ENCODE measurements at regions of chr2 and their contacts with region 1.

Region 1: GRCh38 chr2:19347619-19348562 is 10.5 kb downstream of the OSR1 start:
- DNase-seq: peak; percentile 89 to 99 (median 97)
- ATAC-seq: peak; percentile 88
- H3K4me3 ChIP-seq: peak overlapping the region; percentile 76 to 96
- H3K4me3 Mint-ChIP-seq: peak overlapping the region; percentile 96
- H3K27ac ChIP-seq: peak overlapping the region; percentile 86 to 93
- H3K27ac Mint-ChIP-seq: peak overlapping the region; percentile 99
- H3K4me1 ChIP-seq: peaks cover 39% of the 10 kb centered on the region
- H3K4me1 Mint-ChIP-seq: peaks cover 36% of the 10 kb centered on the region
- H3K27me3 ChIP-seq: peaks cover 34% of the 10 kb centered on the region in 2 experiments
- H3K27me3 Mint-ChIP-seq: peaks cover 35% of the 10 kb centered on the region
- CTCF ChIP-seq: no peak

Region 2: DNA sequence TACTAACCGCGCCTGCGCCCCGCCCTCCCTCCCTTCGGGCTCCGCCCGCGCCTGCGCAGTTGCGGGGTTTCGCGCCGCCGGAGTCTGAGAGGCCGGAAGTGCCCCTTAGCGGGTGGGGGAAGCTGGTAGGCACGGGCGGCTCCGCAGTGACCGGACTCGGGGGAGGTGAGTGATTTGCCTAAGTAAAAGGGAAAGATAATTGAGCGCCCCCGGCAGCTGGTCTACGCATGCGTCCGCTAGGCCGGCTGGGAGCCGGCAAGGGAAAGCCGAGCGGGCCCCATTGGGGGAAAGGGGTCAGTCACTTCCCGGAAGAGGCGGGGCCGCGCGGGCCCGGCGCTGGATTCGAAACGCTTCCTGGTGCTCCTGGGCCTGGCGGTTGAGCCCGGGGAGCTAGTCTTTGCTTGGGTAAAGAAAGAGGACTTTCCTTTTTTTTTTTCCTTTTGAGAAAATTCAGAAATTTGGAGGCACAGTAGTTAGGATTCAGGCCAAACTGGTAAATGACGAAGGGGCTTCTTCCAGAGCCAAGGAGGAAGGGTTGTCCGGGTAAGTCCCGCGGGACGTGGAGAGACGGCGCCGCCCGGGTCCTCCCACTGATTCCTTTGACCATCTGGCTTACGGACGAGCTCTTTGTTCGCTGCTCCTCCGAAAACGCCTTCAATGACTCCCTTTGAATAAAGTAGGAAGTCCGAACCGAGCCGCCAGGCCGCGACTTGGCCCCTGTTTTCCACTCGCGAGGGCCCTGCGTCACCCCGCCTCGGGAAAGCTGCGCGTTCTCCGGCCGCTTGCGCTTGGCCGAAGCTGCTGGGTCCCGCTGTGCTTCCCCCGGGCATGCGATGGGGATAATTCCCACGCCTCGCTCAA is 1593.9 kb before region 1 on chr2 and contains the starts of genes GEN1 and SMC6:
- CTCF ChIA-PET with region 1: no interaction called
- POLR2A ChIA-PET with region 1: no interaction called
- intact Hi-C with region 1: loop called (anchors 5 kb)
- DNase-seq: peak; percentile 79 to 95 (median 90)
- ATAC-seq: peak; percentile 82
- H3K4me3 ChIP-seq: peak within 1 kb of the TSS; percentile 82 to 87
- H3K4me3 Mint-ChIP-seq: peak within 1 kb of the TSS; percentile 92
- H3K27ac ChIP-seq: peak within 1 kb of the TSS; percentile 95 to 100
- H3K27ac Mint-ChIP-seq: peak within 1 kb of the TSS; percentile 97
- H3K4me1 ChIP-seq: peaks cover 17% of the 10 kb centered on the region
- H3K4me1 Mint-ChIP-seq: peaks cover 27% of the 10 kb centered on the region
- H3K27me3 ChIP-seq: no peaks in the 10 kb centered on the region
- H3K27me3 Mint-ChIP-seq: no peaks in the 10 kb centered on the region
- CTCF ChIP-seq: no peak
- total RNA-seq, gene GEN1: 6.3 to 7.3 TPM
- total RNA-seq, gene SMC6: 5.0 to 6.2 TPM

Region 3: DNA sequence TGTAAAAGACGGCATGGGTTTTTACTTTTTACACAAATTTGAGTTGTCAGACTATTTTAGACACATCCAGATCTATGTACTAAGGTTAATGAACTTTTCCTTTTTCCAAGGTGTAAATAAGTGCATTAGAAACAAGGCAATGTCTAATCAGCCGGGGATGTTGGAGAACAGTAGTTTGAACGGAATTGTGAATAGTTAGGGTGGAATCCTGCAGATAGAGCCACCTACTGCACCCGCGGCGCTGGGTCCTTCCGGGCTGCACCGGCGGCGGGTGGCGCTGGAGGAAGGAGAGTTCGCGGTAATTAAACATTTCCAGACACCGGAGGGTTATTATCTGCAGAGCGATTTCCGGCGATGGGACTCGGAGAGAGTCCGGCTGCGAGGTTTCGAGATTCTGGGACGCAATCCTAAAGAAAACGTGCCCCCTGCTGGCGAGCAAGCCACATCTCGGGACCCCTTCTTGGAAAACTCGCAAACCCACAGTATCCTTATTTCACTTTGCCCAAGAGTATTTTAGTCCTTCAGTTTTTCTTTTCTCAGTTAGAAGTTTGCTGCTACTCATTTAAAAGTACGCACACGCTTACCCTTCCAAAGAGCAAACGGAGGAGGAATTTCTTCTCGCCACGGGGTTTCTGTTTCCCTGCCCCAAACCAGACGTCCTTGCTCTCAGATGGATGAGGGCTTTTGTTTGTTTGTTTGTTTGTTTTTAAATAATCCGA is 15.0 kb after region 1 on chr2:
- CTCF ChIA-PET with region 1: interaction called, 33 read pairs
- POLR2A ChIA-PET with region 1: interaction called, 36 read pairs
- intact Hi-C with region 1: loop called (anchors 1 to 2 kb)
- DNase-seq: peak in 6 of 9 experiments; percentile 29 to 74 (median 52)
- ATAC-seq: peak; percentile 48
- H3K4me3 ChIP-seq: peak overlapping the region; percentile 67 to 70
- H3K4me3 Mint-ChIP-seq: peak overlapping the region; percentile 93
- H3K27ac ChIP-seq: no peak overlapping the region
- H3K27ac Mint-ChIP-seq: peak overlapping the region; percentile 68
- H3K4me1 ChIP-seq: peaks cover 36% of the 10 kb centered on the region
- H3K4me1 Mint-ChIP-seq: peaks cover 37% of the 10 kb centered on the region
- H3K27me3 ChIP-seq: peaks cover 28 to 33% of the 10 kb centered on the region in 2 experiments
- H3K27me3 Mint-ChIP-seq: peaks cover 33% of the 10 kb centered on the region
- CTCF ChIP-seq: peak; percentile 38

Region 4: GRCh38 chr2:19863303-19864041 is 515.6 kb after region 1 on chr2:
- CTCF ChIA-PET with region 1: interaction called, 9 read pairs
- POLR2A ChIA-PET with region 1: interaction called, 3 read pairs
- intact Hi-C with region 1: loop called (anchors 2 kb)
- DNase-seq: peak; percentile 51 to 84 (median 70)
- ATAC-seq: peak; percentile 91
- H3K4me3 ChIP-seq: peak overlapping the region in 1 of 2 experiments; percentile 28
- H3K4me3 Mint-ChIP-seq: no peak overlapping the region
- H3K27ac ChIP-seq: no peak overlapping the region
- H3K27ac Mint-ChIP-seq: no peak overlapping the region
- H3K4me1 ChIP-seq: peaks cover 10% of the 10 kb centered on the region
- H3K4me1 Mint-ChIP-seq: peaks cover 9% of the 10 kb centered on the region
- H3K27me3 ChIP-seq: peaks cover 0 to 3% of the 10 kb centered on the region in 2 experiments
- H3K27me3 Mint-ChIP-seq: peaks cover 2% of the 10 kb centered on the region
- CTCF ChIP-seq: peak; percentile 98

Region 5: GRCh38 chr2:20051532-20052228 is 703.8 kb after region 1 on chr2 and contains the start of gene LAPTM4A:
- CTCF ChIA-PET with region 1: no interaction called
- POLR2A ChIA-PET with region 1: no interaction called
- intact Hi-C with region 1: loop called (anchors 1 to 2 kb)
- DNase-seq: peak; percentile 95 to 100 (median 97)
- ATAC-seq: peak; percentile 88
- H3K4me3 ChIP-seq: peak within 1 kb of the TSS; percentile 82 to 90
- H3K4me3 Mint-ChIP-seq: no peak within 1 kb of the TSS
- H3K27ac ChIP-seq: peak within 1 kb of the TSS; percentile 99
- H3K27ac Mint-ChIP-seq: no peak within 1 kb of the TSS
- H3K4me1 ChIP-seq: peaks cover 28% of the 10 kb centered on the region
- H3K4me1 Mint-ChIP-seq: peaks cover 31% of the 10 kb centered on the region
- H3K27me3 ChIP-seq: no peaks in the 10 kb centered on the region
- H3K27me3 Mint-ChIP-seq: peaks cover 19% of the 10 kb centered on the region
- CTCF ChIP-seq: no peak
- total RNA-seq, gene LAPTM4A: 92.4 to 98.8 TPM

Region 6: DNA sequence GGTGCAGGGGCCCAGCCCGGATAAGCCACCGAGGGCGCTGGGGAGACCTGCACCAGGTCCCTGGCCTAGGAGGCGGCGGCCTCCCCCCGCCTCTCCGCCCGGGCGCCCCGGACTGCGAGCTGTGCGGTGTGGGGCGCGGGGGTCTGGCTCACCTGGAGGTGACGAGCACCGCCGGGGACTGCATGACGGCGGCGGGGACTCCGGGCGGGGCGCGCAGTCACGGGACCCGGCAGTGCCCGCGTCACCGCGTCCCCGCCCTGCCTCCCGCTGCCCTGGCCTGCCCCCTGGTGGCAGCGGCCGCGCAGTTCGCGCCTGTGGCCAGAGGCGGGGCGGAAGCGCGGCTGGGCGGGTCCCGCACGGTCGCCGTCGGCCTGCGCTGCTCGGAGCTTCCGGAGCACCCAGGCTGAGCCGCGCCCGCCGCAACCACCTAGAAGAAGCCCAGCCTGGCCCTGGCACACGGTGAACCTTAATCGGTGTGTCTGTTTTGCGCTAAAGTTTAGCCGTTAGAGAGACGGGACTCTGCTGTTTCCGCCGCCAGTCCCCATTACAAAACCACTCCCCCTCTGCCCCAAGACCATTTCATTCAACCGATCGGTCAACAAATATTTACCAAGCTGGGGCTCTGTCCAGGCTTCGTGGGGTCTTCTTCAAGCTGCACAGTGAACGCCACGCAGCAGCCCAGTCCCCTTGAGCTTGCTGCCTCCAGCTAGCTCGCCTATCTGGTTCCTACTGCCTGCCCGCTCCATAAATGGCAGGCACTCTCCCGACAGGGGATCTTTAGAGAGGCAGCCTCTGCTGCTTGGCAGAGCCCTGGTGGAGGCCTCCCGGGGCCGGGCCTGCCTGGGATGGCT is 1303.2 kb after region 1 on chr2 and contains the start of gene HS1BP3:
- CTCF ChIA-PET with region 1: no interaction called
- POLR2A ChIA-PET with region 1: no interaction called
- intact Hi-C with region 1: loop called in 1 of 2 experiments (anchors 5 kb)
- DNase-seq: peak; percentile 82 to 95 (median 88)
- ATAC-seq: peak; percentile 91
- H3K4me3 ChIP-seq: peak within 1 kb of the TSS; percentile 76 to 95
- H3K4me3 Mint-ChIP-seq: peak within 1 kb of the TSS; percentile 85
- H3K27ac ChIP-seq: peak within 1 kb of the TSS; percentile 93 to 94
- H3K27ac Mint-ChIP-seq: peak within 1 kb of the TSS; percentile 91
- H3K4me1 ChIP-seq: peaks cover 19% of the 10 kb centered on the region
- H3K4me1 Mint-ChIP-seq: peaks cover 34% of the 10 kb centered on the region
- H3K27me3 ChIP-seq: no peaks in the 10 kb centered on the region
- H3K27me3 Mint-ChIP-seq: peaks cover 2% of the 10 kb centered on the region
- CTCF ChIP-seq: peak; percentile 86
- total RNA-seq, gene HS1BP3: 3.3 to 6.9 TPM

Measured in CD8-positive, alpha-beta T cell (primary cell).